Aorta (tissue), 5 donors: ENCODE measurements at regions of chr10 and their contacts with region 1.

Region 1: DNA sequence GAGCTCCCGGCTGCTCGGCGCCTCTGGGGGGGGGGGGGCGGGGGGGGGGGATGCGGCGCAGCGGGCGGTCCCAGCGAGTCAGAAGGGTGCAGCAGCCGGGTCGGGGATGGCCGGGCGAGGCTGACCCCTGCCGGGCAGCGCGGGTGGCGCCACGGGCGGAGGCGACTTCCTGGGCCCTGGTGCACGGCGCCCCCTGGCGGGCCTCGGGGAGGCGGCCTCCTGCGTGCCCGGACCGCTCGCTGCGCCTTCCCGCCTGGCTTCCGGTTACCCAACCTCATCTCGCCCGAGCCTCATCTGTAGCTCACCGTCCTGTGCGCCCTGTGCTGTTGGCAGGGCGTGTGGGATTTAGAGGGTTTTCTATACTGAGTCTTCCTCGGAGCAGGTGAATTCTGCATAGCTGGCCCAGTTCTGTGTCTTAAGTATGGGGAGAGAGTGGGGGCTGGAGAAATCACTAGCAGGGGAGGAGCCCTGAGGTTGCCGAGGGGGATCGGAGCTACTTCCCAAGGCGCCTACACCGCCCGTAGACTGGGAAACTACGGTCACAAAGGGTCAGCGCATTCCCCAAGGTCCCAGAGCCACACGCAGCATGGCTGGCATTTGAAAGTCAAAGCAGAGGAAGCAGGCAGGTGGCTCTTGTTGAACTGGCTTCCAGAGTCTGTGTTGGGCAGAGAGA is 28.3 kb upstream of the WDFY4 start:
- DNase-seq: peak; percentile 95 to 98
- ATAC-seq: peak; percentile 98
- H3K4me3 ChIP-seq: peak overlapping the region; percentile 16 to 54
- H3K27ac ChIP-seq: no peak overlapping the region
- H3K4me1 ChIP-seq: no peaks in the 10 kb centered on the region
- H3K27me3 ChIP-seq: no peaks in the 10 kb centered on the region

Region 2: GRCh38 chr10:48523820-48524758 is 132.3 kb before region 1 on chr10:
- intact Hi-C with region 1: loop called in 1 of 2 experiments (anchors 10 kb)
- DNase-seq: peak in 1 of 2 donors; percentile 47
- ATAC-seq: no peak
- H3K4me3 ChIP-seq: peak overlapping the region; percentile 51 to 65
- H3K27ac ChIP-seq: peak overlapping the region in 1 of 2 donors; percentile 47
- H3K4me1 ChIP-seq: no peaks in the 10 kb centered on the region
- H3K27me3 ChIP-seq: no peaks in the 10 kb centered on the region

Region 3: GRCh38 chr10:48551861-48552591 is 104.4 kb before region 1 on chr10:
- intact Hi-C with region 1: loop called (anchors 1 to 2 kb)
- DNase-seq: peak in 1 of 2 donors; percentile 58
- ATAC-seq: no peak
- H3K4me3 ChIP-seq: no peak overlapping the region
- H3K27ac ChIP-seq: no peak overlapping the region
- H3K4me1 ChIP-seq: no peaks in the 10 kb centered on the region
- H3K27me3 ChIP-seq: no peaks in the 10 kb centered on the region

Region 4: DNA sequence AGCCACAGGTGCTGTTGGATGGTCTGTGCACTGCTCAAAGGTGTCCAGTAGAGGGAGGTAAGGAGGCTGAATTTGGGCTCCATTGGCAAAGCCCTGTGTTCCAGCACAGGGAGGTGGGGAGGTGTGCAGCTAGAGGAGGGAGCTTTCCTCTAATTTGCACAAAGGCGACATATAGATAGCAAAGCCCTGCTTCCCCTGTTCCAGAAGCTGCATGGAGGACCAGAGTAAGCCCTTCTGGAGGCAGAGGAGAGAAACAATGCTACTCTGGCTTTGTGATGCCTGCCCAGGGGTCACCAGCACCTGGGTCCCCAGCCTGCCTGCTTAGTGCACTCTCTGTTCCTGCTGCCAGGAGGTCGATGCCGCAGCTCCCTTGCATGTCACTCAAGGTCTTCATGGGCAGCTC is 48.1 kb before region 1 on chr10:
- intact Hi-C with region 1: loop called (anchors 2 to 5 kb)
- DNase-seq: no peak
- ATAC-seq: no peak
- H3K4me3 ChIP-seq: no peak overlapping the region
- H3K27ac ChIP-seq: no peak overlapping the region
- H3K4me1 ChIP-seq: no peaks in the 10 kb centered on the region
- H3K27me3 ChIP-seq: no peaks in the 10 kb centered on the region

Region 5: DNA sequence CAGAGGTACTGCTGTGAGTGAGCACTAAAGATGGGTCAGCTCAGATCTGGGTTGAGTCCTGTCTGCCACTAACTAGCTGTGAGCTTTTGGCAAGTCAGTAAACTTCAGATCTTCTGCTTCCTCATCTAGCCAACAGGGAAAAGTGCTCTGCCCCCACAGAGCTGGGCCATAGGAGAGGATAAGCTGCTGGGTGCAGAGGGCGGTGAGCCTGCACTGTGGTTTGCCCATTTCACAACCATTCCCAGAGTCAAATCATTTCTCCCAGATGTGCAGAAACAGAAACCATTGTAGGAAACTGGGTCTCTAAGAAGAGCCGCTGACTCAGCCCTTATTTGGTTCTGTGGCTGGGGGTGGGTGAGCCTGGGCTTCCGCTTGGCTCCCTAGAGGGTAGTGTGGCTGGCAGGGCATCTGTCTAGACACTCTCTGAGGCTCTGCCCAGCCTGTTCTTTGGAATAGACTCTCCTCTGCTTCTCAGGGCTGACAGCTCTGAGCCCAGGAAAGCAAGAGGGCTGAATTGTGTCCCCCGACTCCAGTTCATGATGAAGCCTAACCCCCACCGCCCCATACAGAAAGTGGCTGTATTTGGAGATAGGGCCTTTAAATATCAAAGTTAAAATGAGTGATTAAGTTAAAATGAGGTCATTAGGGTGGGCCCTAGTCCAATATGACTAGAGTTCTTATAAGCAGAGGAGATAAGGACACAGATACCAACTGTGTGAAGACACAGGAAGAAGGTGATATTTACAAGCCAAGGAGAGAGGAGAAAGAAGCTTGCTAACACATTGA is 22.0 kb before region 1 on chr10:
- intact Hi-C with region 1: loop called in 1 of 2 experiments (anchors 2 kb)
- DNase-seq: peak; percentile 85 to 91
- ATAC-seq: peak; percentile 89
- H3K4me3 ChIP-seq: no peak overlapping the region
- H3K27ac ChIP-seq: peak overlapping the region; percentile 64 to 78
- H3K4me1 ChIP-seq: peaks cover 3% of the 10 kb centered on the region in 2 donors
- H3K27me3 ChIP-seq: no peaks in the 10 kb centered on the region

Region 6: DNA sequence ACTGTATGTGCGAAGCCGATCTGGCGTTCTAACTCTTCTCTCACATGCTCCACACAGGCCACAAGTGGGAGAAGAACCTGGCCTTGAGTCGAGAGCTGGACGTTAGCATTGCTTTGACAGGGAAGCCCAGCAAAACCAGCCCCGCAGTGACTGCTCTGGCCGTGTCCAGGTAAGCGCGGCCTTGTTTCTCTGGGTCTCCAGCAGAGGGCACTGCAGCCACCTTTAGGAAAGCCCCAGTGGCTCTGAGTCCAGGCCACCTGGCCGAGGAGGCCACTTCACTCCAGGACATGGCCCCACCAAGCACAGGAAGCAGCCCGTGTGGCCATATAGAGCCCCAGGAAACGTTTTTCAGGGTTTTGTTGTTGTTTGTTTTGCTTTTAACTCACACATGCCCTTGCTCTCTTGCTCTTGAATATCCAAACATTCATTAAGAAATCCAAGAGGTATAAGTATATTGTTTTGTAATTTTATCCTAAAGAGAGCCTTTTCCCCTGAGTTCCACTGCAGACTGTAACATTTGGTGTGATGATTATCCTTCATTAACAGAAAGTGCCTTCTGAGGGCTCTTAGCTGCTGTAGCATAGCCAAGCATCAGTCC is 325.0 kb after region 1 on chr10:
- intact Hi-C with region 1: loop called in 1 of 2 experiments (anchors 5 kb)
- DNase-seq: peak; percentile 66 to 84
- ATAC-seq: peak; percentile 75
- H3K4me3 ChIP-seq: no peak overlapping the region
- H3K27ac ChIP-seq: no peak overlapping the region
- H3K4me1 ChIP-seq: no peaks in the 10 kb centered on the region
- H3K27me3 ChIP-seq: no peaks in the 10 kb centered on the region

Region 7: GRCh38 chr10:49164559-49165188 is 508.3 kb after region 1 on chr10:
- intact Hi-C with region 1: loop called (anchors 2 to 5 kb)
- DNase-seq: no peak
- ATAC-seq: no peak
- H3K4me3 ChIP-seq: no peak overlapping the region
- H3K27ac ChIP-seq: no peak overlapping the region
- H3K4me1 ChIP-seq: no peaks in the 10 kb centered on the region
- H3K27me3 ChIP-seq: no peaks in the 10 kb centered on the region